GM13977 (cell line): ENCODE measurements at regions of chr2 and their contacts with region 1.

Region 1: GRCh38 chr2:172465417-172466334 is 38.3 kb downstream of the ITGA6 start:
- DNase-seq: peak; percentile 52
- CTCF ChIP-seq: peak; percentile 77

Region 2: DNA sequence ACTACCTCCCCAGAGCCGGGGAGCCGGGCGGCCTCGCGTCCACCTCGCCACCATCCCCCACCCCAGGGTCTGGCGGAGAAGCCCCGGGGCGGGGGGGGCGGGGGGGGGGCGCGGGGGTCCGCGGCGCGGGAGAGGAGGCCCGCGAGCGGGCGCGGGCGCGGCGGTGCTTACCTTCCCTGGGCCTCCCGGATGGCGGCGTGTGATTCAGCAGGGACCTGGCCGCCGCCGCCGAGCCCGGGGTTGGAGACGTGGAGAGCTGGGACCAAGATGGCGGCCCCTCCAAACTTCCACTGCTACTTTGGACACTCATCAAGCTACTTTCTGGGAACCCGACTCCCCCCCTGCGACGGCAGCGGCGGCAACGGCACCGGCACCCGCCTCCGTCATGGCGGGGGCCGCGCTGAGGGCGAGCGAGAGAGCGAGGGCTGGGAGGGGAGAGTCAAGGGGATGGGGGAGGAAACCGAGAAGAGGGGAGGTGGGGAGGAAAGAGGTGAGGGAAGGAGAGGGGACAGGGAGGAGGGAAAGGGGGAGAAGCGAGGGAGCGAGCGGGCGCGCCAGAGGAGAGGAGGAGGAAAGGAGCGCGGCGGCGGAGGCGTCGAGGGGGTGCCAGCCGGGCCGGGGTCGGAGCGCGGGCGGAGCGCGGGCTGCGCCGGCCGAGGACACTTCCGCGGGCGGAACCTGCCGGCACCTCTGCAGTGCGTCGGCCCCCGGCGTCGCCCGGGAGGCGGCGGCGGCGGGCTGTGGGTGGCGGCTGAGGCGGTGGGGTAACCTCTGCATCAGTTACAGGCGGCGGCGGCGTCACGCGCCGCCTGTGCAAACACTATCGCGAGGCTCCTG is 1305.3 kb before region 1 on chr2 and contains the start of gene TLK1:
- in situ Hi-C with region 1: no loop called
- DNase-seq: peak; percentile 70
- CTCF ChIP-seq: peak; percentile 29

Region 3: DNA sequence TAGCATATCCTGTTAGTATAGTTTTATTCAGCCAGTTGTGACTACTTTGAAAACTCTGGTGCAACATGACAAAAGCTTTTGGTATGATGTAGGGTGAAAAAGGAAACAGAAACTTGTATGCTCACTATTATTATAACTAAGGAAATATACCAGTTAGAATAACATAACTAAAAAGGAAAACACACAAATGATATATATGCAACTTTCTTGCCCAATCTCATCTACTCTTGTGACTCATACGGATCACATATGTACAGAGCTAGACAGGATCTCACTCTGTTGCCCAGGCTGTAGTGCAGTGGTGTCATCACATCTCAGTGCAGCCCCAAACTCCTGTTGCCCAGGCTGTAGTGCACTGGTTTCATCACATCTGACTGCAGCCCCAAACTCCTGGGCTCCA is 1292.6 kb before region 1 on chr2:
- in situ Hi-C with region 1: no loop called
- DNase-seq: no peak
- CTCF ChIP-seq: no peak

Region 4: DNA sequence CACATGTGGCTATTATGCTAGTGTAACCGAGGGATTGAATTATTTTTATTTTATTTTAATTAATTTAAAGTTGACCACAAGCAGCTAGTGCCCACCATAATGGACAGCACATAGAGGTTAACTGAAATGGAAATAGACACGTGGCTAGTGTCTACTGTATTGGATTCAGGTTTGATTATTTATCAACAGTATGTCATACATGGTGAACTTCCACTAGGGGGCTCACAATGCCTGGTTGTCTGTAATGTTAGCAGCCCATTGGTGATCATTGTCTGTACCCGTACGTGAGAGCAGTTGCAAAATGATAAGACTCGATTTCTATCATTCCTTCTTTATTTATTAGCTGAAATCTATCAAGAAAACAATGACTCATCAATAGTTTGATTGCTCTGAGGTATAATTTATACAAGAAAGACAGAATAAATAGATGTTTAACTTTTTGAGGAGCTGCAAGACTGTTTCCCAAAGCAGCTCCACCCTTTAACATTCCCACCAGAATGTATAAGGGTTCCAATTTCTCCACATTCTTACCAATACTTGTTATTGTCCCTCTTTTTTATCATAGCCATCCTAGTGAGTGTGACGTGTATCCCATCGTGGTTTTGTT is 866.9 kb before region 1 on chr2:
- in situ Hi-C with region 1: loop called (anchors 25 kb)
- DNase-seq: peak; percentile 80
- CTCF ChIP-seq: peak; percentile 81

Region 5: GRCh38 chr2:171703574-171704347 is 761.9 kb before region 1 on chr2:
- in situ Hi-C with region 1: loop called (anchors 25 kb)
- DNase-seq: peak; percentile 27
- CTCF ChIP-seq: peak; percentile 53

Region 6: GRCh38 chr2:172172513-172173173 is 293.0 kb before region 1 on chr2:
- in situ Hi-C with region 1: loop called (anchors 25 kb)
- DNase-seq: peak; percentile 65
- CTCF ChIP-seq: peak; percentile 73

Region 7: DNA sequence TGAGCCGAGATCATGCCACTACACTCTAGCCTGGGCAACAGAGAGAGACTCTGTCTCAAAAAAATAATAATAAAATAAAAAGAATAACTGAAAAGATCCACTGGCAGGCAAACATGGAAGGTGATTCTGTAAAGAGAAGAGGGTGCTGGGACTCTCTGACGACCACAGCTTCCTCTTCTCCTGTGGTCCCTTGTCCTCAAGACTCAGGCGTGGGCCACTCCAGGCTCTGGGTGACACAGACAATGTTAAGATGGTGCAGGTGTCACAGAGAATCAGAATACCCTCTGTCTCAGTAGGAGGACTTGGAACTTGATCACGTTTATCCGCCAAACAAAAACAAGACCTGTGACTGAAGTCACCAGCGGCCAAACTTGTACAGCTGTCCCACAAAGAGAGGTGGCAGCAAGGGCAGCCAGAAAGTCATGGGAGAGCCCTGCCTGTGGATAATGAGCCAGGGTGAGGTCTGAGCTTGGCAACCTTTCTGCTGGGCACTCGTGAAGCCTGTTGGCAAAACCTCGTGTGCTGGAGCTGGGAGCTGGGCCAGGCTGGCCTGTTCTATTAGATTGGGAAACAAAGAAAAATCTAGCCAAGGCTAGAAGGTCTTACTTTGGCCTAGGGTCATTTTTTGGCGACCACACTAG is 114.7 kb before region 1 on chr2:
- in situ Hi-C with region 1: no loop called
- DNase-seq: no peak
- CTCF ChIP-seq: no peak